ENCODE measurements at regions of chr2 and their contacts with region 1.

Region 1: DNA sequence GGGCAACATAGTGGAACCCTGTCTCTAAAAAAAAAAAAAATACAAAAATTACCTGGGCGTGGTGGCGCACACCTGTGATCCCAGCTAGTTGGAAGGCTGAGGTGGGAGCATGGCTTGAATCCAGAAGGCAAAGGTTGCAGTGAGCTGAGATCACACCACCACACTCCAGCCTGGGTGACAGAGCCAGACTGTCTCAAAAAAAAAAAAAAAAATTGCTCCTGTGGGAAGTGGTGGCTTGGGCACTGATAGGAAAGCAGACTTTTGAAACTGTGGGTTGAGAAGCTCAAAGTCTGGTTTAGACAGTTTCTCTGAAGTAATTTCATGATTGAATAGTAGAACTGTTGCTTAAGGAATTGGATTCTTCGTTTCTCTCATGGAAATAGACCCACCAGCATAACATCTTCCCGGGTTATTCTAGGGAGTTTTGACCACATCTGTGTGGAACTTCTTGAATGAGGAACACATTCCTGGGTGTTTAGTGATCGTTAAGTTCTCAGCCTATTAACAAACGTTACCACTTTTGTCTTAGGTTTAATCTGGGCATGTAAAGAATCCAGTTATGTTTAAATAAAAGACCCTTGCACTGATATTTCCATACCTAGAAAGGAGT is 33.5 kb downstream of the GRHL1 start:
- DNase-seq: no peak
- ATAC-seq: peak; percentile 64 to 75 (median 68)
- H3K4me3 ChIP-seq: no peak overlapping the region
- H3K27ac ChIP-seq: no peak overlapping the region
- H3K4me1 ChIP-seq: peaks cover 0 to 6% (median 4%) of the 10 kb centered on the region in 3 donors
- H3K27me3 ChIP-seq: no peaks in the 10 kb centered on the region
- CTCF ChIP-seq: no peak

Region 2: GRCh38 chr2:10033191-10034006 is 48.4 kb after region 1 on chr2:
- intact Hi-C with region 1: loop called in 1 of 3 experiments (anchors 2 kb)
- DNase-seq: peak in 1 of 6 donors; percentile 65
- ATAC-seq: no peak
- H3K4me3 ChIP-seq: no peak overlapping the region
- H3K27ac ChIP-seq: no peak overlapping the region
- H3K4me1 ChIP-seq: peaks cover 17 to 23% (median 17%) of the 10 kb centered on the region in 3 donors
- H3K27me3 ChIP-seq: no peaks in the 10 kb centered on the region
- CTCF ChIP-seq: no peak

Region 3: GRCh38 chr2:10048501-10049171 is 63.7 kb after region 1 on chr2:
- intact Hi-C with region 1: loop called in 2 of 3 experiments (anchors 5 kb)
- DNase-seq: peak in 3 of 6 donors; percentile 21 to 48 (median 31)
- ATAC-seq: peak in 2 of 4 donors; percentile 9 to 22
- H3K4me3 ChIP-seq: peak overlapping the region in 1 of 4 donors; percentile 22
- H3K27ac ChIP-seq: peak overlapping the region in 1 of 4 donors; percentile 10
- H3K4me1 ChIP-seq: peaks cover 35 to 43% (median 40%) of the 10 kb centered on the region in 3 donors
- H3K27me3 ChIP-seq: no peaks in the 10 kb centered on the region
- CTCF ChIP-seq: peak in 3 of 4 donors; percentile 42 to 49 (median 46)

Measured in pancreas (tissue), 10 donors.